Right ventricle myocardium inferior (tissue), 1 donor: ENCODE measurements at regions of chr9 and their contacts with region 1.

Region 1: DNA sequence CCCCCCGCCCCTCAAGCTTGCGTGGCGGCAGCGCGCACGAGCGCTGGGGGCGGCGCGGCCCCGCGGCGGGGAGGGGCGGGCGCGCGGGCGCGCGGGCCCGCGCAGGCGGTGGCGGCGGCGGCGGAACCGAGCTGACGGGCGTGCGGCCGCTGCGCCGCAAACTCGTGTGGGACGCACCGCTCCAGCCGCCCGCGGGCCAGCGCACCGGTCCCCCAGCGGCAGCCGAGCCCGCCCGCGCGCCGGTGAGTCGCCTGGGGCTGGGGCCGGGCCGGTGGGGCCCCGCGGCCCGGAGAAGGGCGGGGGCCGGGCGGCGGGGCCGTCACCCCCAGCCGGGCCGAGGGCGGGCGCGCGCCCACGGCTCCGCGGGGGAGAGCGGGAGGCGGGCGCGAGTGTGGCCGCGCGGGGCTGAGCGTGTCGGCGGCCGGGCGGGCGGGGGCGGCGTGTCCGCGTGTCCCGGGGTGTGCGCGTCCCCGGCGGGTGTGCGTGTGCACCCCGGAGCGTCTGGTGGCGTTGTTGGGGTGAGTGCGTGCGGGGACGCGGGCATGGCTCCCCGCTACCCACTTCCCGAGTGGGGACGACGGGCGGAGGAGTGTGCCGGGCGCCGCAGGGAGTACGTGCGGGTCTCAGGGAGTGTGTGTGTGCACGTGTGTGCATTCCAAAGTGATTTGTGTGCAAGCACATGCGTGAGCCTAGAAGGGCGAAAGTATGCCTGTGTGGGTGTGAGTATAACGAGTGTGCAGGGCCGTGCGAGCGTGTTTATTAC is at the start of gene NEK6:
- DNase-seq: peak; percentile 80
- ATAC-seq: peak; percentile 67
- total RNA-seq, gene NEK6: 10.5 TPM

Region 2: DNA sequence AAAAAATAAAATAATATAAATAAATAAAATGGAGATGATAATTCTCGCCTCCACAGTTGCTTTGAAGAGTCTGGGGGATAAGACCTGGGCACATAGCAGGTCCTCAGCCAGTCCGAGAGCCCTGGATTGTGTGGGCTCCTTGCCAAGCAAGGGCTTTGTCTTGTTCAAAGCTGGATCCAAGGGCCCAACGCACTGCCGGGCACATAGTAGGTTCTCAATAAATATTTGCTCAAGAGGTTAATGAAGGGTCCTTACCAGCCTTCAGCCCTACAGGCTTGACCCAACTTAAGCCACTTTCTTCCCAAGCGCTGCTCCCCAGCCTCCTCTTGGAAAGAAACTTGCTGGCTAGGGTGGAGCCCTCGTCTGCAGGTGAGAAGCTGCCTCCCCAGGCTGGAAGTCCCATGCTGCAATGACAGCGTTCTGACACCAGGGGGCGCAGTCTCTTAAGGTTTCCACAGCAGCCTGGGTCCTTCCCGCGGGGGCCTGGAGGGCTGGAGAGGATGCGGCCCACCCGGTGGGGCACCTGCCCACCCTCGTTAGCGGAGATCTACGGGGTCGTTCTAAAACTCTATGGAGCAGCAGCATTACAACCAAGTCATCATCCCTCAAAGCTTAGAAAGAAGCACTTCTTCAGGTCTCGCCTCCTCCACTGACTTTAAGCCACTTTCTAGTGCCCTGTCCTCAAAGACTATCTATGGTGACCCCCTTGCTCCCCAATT is 131.3 kb before region 1 on chr9:
- intact Hi-C with region 1: loop called (anchors 10 kb)
- DNase-seq: peak; percentile 89
- ATAC-seq: peak; percentile 66

Region 3: GRCh38 chr9:124218438-124218982 is 39.5 kb before region 1 on chr9:
- intact Hi-C with region 1: loop called (anchors 5 kb)
- DNase-seq: no peak
- ATAC-seq: peak; percentile 38

Region 4: DNA sequence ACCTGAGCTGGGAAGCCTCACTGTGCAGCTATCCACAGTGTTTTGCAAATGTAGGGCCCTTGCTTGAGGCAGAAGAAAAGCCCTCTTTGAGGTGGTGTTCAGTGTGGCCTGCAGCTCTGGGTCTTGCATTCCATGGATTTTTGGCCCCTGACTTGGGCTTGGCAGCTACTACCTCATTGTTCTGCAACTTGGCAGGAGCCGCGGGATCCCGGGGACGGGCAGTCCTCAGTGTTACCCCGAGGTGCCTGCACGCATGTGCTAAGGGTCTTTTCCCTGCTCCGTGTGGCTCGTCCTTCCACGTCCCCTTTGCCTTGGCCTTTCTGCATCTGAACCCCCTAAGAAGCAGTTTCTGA is 39.5 kb after region 1 on chr9:
- intact Hi-C with region 1: loop called (anchors 5 kb)
- DNase-seq: peak; percentile 87
- ATAC-seq: peak; percentile 91

Region 5: DNA sequence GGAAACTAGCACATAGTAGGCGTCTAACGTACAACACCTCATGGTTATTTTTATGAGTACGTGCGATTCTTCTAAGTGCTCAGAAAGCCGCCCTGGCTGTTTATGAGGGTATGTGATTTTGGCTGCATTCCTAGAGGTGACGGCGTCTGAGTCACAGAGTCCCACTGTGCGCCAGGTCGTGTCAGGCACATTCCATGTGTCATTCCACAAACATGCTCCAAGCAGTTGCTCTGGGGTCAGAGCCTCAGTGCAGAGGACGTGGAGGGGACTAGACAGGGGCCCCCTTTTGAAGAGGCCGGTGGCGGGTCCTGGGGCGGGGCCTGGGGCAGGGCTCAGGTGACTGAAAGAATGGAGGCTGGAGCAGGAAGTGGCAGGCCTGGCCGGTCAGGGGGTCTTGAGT is 51.6 kb after region 1 on chr9:
- intact Hi-C with region 1: no loop called
- DNase-seq: no peak
- ATAC-seq: peak; percentile 35

Region 6: GRCh38 chr9:124320062-124320973 is 62.3 kb after region 1 on chr9:
- intact Hi-C with region 1: loop called (anchors 5 kb)
- DNase-seq: no peak
- ATAC-seq: peak; percentile 89